ENCODE measurements at regions of chr10 and their contacts with region 1.

Region 1: GRCh38 chr10:66180581-66181318 is 745.1 kb upstream of the LRRTM3 start:
- DNase-seq: peak; percentile 47
- CTCF ChIP-seq: peak; percentile 54

Region 2: GRCh38 chr10:66167816-66168215 is 12.9 kb before region 1 on chr10:
- CTCF ChIA-PET with region 1: interaction called, 11 read pairs
- POLR2A ChIA-PET with region 1: no interaction called
- DNase-seq: no peak
- CTCF ChIP-seq: no peak

Region 3: DNA sequence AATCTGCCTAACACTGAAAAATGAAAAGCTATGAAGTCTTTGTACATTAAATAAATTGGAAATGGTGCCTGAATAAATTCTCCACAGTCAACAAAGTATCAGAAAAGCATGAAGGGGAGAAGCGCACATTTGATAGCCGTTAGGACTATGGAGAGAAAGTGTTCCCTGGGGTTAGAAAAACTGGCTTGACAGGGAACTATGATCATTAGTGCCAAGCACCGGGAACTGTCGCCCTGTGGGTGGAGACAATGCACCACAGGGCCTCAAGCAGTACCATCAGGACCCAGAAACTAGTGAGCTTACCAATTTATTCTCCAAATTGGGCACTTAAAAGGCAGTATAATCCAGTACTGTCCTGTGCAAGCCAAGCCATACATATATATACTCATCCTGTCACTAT is 91.6 kb after region 1 on chr10:
- CTCF ChIA-PET with region 1: no interaction called
- POLR2A ChIA-PET with region 1: no interaction called
- DNase-seq: no peak
- CTCF ChIP-seq: no peak

Measured in GM10248 (cell line).